ENCODE measurements at regions of chr2 and their contacts with region 1.

Region 1: GRCh38 chr2:36355151-36355889 is at the start of gene CRIM1:
- DNase-seq: peak; percentile 92
- H3K4me3 ChIP-seq: peak within 1 kb of the TSS; percentile 80 to 83
- H3K27ac ChIP-seq: peak within 1 kb of the TSS; percentile 79 to 89
- H3K4me1 ChIP-seq: no peaks in the 10 kb centered on the region
- H3K27me3 ChIP-seq: no peaks in the 10 kb centered on the region
- CTCF ChIP-seq: peak in 1 of 4 experiments; percentile 14
- POLR2A ChIP-seq: peak; percentile 92
- total RNA-seq, gene CRIM1: 55.2 to 101 TPM

Region 2: GRCh38 chr2:36461039-36461681 is 105.8 kb after region 1 on chr2:
- intact Hi-C with region 1: loop called (anchors 5 kb)
- DNase-seq: no peak
- H3K4me3 ChIP-seq: no peak overlapping the region
- H3K27ac ChIP-seq: peak overlapping the region in 1 of 2 donors; percentile 23
- H3K4me1 ChIP-seq: no peaks in the 10 kb centered on the region
- H3K27me3 ChIP-seq: no peaks in the 10 kb centered on the region
- CTCF ChIP-seq: no peak
- POLR2A ChIP-seq: no peak

Region 3: DNA sequence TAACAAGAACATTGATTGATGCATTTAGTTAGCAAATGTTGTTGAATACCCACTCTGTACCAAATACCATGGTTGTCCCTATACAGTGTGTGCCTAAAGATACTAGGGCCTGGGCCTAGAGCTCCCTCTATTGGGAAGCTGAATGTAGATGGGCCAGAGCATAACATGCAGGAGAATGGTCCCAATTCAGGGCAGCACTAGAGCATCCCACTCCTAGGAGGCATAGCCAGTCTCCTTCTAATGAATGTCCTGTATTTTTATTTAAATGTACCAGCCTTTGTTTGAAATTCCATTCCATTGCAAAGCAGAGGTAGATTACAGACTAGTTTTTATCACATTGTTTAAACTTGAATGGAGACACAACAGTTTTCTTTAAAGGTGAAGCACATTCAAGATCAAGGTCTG is 152.1 kb after region 1 on chr2:
- intact Hi-C with region 1: loop called (anchors 5 kb)
- DNase-seq: peak; percentile 35
- H3K4me3 ChIP-seq: no peak overlapping the region
- H3K27ac ChIP-seq: no peak overlapping the region
- H3K4me1 ChIP-seq: no peaks in the 10 kb centered on the region
- H3K27me3 ChIP-seq: no peaks in the 10 kb centered on the region
- CTCF ChIP-seq: peak; percentile 14 to 64 (median 54)
- POLR2A ChIP-seq: no peak

Region 4: GRCh38 chr2:36663851-36664695 is 308.8 kb after region 1 on chr2:
- intact Hi-C with region 1: loop called (anchors 5 kb)
- DNase-seq: peak; percentile 23
- H3K4me3 ChIP-seq: no peak overlapping the region
- H3K27ac ChIP-seq: no peak overlapping the region
- H3K4me1 ChIP-seq: no peaks in the 10 kb centered on the region
- H3K27me3 ChIP-seq: no peaks in the 10 kb centered on the region
- CTCF ChIP-seq: peak in 3 of 4 experiments; percentile 63 to 70 (median 63)
- POLR2A ChIP-seq: no peak

Region 5: GRCh38 chr2:36780231-36780839 is 425.0 kb after region 1 on chr2:
- intact Hi-C with region 1: loop called (anchors 5 kb)
- DNase-seq: peak; percentile 27
- H3K4me3 ChIP-seq: no peak overlapping the region
- H3K27ac ChIP-seq: no peak overlapping the region
- H3K4me1 ChIP-seq: no peaks in the 10 kb centered on the region
- H3K27me3 ChIP-seq: no peaks in the 10 kb centered on the region
- CTCF ChIP-seq: peak; percentile 79 to 85 (median 81)
- POLR2A ChIP-seq: no peak